ENCODE measurements at regions of chr6 and their contacts with region 1.

Region 1: GRCh38 chr6:112076200-112076599 is 11.1 kb downstream of the TUBE1 start:
- DNase-seq: no peak
- ATAC-seq: no peak
- H3K4me3 Mint-ChIP-seq: no peak overlapping the region
- H3K27ac Mint-ChIP-seq: no peak overlapping the region
- H3K4me1 Mint-ChIP-seq: no peaks in the 10 kb centered on the region
- H3K27me3 Mint-ChIP-seq: no peaks in the 10 kb centered on the region

Region 2: DNA sequence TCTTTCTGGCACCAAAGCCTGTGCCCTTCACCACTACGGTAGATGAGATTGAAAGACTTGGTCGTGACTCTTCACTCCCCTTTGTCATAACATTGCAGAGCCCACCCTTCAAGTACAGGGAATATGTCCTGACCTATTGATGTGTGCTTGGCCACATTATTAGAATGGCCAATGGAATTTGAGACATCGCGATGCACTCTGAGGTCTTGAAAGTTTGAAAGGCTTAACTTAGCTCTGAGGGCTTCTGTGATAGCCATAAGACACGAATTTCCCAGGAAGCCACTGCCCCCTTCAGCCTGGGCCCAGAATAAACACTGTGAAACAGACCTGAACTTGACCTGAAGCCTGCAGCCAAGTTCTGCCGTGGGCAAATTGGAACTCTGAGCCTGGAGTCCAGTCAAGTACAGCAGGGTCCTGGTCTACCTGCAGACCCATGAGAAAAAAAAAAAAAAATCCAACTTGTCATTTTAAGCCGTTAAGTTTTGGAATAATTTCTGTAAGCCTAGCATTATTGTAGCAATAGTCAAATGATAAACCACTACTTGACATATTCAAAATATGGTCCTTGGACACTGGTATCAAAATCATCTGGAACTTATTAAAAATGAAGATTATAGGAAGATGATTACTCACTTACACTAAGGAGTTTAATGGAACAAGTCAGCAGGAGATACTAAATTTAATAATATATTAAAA is 433.6 kb before region 1 on chr6:
- CTCF ChIA-PET with region 1: no interaction called
- DNase-seq: peak; percentile 66
- ATAC-seq: peak; percentile 80
- H3K4me3 Mint-ChIP-seq: no peak overlapping the region
- H3K27ac Mint-ChIP-seq: no peak overlapping the region
- H3K4me1 Mint-ChIP-seq: no peaks in the 10 kb centered on the region
- H3K27me3 Mint-ChIP-seq: no peaks in the 10 kb centered on the region

Region 3: DNA sequence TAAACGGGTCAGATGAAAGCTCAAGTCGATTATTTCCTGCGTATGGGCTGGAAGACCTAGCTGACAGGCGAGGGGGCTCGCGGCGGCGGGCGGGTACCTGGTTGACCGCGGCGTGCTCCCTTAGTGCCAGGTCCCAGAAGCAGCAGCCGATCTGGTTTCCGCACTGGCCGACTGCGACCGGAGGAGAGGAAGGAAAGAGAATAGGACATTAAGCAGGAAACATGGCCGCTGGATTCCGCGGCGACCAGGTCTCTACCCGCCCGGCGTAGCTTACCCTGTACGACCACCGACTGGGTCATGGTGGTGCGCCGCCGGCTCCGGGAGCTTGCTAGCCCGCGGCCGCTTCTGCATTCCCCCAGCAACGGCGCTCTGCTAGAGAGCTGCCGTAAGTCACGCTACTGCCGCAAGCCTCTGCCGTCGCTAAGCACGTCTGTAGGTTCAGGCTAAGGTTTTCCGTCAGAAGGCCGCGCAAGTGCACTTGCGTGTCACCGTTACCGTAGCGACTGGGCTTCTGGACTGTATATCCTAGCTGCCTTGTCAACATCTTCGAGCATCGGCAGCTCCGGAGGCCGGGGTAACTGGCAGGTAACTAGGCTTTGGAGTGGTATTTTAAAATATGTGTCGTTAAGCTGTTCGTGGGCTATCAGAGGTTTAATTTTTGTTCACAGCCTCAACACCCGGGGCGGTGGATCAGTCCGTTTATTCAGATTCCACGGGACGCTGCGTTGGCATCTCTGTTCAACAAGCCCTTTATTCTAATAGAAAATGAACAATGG is 11.1 kb after region 1 on chr6 and contains the starts of genes FAM229B and TUBE1:
- CTCF ChIA-PET with region 1: interaction called, 12 read pairs
- DNase-seq: peak; percentile 96
- ATAC-seq: peak; percentile 95
- H3K4me3 Mint-ChIP-seq: no peak within 1 kb of the TSS
- H3K27ac Mint-ChIP-seq: no peak within 1 kb of the TSS
- H3K4me1 Mint-ChIP-seq: peaks cover 7% of the 10 kb centered on the region
- H3K27me3 Mint-ChIP-seq: peaks cover 30% of the 10 kb centered on the region
- total RNA-seq, gene FAM229B: 4.1 to 4.5 TPM
- total RNA-seq, gene TUBE1: 20.7 to 28.7 TPM

Region 4: GRCh38 chr6:112203577-112204349 is 127.6 kb after region 1 on chr6:
- CTCF ChIA-PET with region 1: no interaction called
- DNase-seq: no peak
- ATAC-seq: no peak
- H3K4me3 Mint-ChIP-seq: no peak overlapping the region
- H3K27ac Mint-ChIP-seq: no peak overlapping the region
- H3K4me1 Mint-ChIP-seq: no peaks in the 10 kb centered on the region
- H3K27me3 Mint-ChIP-seq: peaks cover 62% of the 10 kb centered on the region

Region 5: DNA sequence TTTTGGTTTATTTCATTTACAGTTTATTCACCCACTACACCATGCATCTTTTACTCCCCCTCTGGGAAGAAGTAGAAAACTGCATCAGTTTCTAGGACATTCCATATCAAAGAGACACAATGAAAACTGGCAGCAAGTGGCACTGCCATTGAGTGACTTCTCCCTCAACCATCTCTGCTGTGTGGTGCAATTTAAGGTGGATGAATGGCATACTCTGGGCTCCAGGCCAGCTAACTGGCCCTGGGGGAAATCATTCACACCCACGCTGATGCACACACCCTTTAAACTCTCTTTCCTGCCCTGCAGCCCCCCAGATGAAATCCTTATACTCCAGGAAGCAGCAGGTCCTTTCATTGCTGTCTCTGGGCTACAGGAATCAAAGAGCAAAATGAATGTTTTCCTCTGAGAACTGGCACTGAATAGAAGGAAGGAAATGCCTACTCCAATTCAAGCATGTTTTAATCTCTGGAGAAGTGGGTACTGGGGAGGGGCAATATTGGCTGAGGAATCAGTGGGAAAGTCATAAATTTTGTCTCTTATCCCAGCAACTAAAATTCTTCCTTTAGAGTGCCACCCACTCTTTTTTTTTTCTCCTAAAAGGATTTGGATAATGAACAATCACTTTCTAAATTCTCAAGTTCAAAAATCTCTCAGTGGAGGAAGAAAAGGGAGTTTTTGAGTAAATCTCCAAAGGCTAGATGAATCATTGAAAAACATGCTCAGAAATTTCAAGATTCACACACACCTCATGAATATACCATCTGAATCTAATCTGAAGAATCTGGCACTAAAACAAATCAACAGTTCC is 254.1 kb after region 1 on chr6:
- CTCF ChIA-PET with region 1: no interaction called
- DNase-seq: no peak
- ATAC-seq: no peak
- H3K4me3 Mint-ChIP-seq: no peak overlapping the region
- H3K27ac Mint-ChIP-seq: no peak overlapping the region
- H3K4me1 Mint-ChIP-seq: no peaks in the 10 kb centered on the region
- H3K27me3 Mint-ChIP-seq: peaks cover 48% of the 10 kb centered on the region

Measured in activated CD8-positive, alpha-beta memory T cell treated with anti-CD3 and anti-CD28 coated beads, Interleukin-2, amount 10 ng/mL, durations not matched to agents 7 days and 5 days (primary cell).